ENCODE measurements at regions of chr2 and their contacts with region 1.

Region 1: GRCh38 chr2:216698895-216699294 is 3.5 kb upstream of the IGFBP5 start:
- DNase-seq: no peak
- ATAC-seq: peak; percentile 72

Region 2: DNA sequence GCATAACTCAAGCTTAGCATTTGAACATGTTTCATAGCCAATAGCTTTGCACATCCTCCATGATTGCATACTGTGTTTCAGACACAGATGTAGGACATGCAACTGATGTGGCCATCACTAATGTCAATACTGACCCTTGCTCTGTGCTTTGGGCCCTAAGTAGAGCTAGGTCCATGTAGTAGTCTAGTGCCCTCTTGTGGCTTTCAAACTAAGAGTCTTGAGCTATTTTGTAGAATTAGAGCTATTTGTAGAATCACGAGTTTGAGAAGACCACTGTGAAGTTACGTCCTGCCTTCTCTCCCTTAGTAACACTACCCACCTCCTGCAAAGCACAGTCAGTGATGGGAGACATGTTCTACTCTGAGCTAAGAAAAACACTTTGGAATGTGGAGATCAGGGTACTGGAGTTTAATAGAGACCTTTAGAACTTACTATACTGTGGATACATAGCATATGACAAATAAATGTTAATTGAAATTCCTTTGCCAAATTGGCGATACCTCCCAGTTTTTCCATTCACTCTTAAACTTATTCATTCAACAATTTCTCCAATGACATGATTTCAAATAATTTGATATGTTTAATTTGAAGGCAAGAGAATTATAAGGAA is 467.5 kb after region 1 on chr2:
- intact Hi-C with region 1: loop called in 1 of 2 experiments (anchors 10 kb)
- DNase-seq: no peak
- ATAC-seq: no peak